ENCODE measurements at regions of chr2 and their contacts with region 1.

Region 1: GRCh38 chr2:8681786-8682692 is at the start of gene ID2:
- DNase-seq: peak; percentile 100
- H3K4me3 Mint-ChIP-seq: peak within 1 kb of the TSS; percentile 98
- H3K27ac Mint-ChIP-seq: peak within 1 kb of the TSS; percentile 97
- H3K4me1 Mint-ChIP-seq: peaks cover 37% of the 10 kb centered on the region
- H3K27me3 Mint-ChIP-seq: peaks cover 13% of the 10 kb centered on the region
- total RNA-seq, gene ID2: 284 and 299 TPM in 2 replicates

Region 2: DNA sequence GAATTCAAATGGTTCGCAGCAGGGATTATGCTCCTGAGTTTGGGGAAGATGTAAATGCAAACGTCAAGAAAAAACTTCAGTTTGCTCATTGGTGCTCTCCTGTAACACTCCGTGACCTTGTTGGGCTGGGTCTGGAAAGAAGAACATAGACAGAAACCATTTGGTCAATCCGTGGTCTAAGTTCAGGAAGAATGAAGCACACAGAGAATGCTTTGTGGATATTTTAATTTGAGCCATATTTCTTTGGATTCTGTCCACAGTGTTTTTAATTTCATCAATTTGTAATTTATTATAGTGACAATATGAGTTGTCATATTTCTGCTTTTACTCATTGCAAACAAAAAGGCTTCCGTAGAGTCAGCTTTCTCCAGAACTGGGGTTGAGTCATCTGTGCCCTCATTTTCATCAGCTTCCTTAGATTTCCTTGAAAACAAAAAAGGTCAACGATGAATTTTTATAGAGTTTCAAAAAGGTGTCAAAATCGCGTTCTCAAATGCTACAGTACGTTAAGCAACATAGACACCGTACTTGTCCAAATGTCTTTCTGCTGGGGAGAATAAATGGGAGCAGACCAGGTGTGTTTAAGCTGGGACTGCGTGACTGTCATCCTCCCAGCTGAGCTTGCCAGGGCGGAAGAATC is 1158.4 kb before region 1 on chr2:
- intact Hi-C with region 1: loop called (anchors 5 kb)
- DNase-seq: no peak
- H3K4me3 Mint-ChIP-seq: peak overlapping the region; percentile 63
- H3K27ac Mint-ChIP-seq: peak overlapping the region; percentile 98
- H3K4me1 Mint-ChIP-seq: peaks cover 53% of the 10 kb centered on the region
- H3K27me3 Mint-ChIP-seq: no peaks in the 10 kb centered on the region

Region 3: DNA sequence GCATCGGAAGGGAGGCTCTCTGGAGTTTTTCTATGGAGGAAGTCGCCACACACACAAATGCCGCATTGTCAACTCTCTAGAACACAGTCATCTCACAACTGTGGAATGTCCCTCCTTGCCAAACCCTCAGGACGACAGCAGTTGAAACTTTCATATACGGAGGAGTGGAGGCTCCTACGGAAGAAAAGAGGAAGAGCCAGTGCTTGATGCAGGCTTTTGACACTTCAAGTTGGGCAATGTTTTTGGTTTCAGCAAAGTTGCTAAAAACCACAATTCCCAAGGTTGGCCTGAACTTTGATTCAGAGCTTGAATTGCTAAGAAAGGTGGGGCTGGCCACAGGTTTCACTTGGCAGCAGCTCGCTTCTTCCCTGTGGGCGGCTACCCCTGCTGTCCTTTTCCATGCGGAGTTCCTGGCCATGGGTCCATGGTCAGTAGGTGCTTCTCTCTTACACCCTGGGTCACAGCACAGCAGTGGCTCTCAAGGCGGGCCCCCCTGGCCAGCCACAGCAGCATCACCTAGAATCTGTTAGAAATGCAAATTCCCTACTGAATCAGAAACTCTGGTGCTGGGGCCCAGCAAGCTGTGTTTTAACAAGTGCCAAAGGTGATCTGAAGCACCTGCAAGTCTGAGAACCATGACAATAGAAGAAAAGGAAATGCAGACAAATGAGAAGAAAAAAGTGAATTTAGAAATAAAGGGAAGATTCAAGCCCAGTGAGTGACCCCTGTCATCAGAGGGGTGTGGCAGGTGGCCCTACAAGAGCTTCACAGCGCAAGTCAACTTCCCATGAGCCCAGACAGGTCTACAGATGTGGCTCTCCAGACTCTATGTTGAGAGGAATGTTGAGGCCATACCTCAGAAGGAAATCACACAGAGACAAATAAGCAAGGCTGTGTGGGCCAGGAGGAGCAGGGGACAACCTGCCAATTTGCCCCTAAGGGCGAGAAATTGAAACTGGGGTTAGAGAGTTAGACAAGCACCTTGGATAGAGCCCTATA is 908.4 kb before region 1 on chr2:
- intact Hi-C with region 1: loop called (anchors 1 kb)
- DNase-seq: peak; percentile 79
- H3K4me3 Mint-ChIP-seq: peak overlapping the region; percentile 25
- H3K27ac Mint-ChIP-seq: peak overlapping the region; percentile 84
- H3K4me1 Mint-ChIP-seq: peaks cover 36% of the 10 kb centered on the region
- H3K27me3 Mint-ChIP-seq: no peaks in the 10 kb centered on the region

Region 4: DNA sequence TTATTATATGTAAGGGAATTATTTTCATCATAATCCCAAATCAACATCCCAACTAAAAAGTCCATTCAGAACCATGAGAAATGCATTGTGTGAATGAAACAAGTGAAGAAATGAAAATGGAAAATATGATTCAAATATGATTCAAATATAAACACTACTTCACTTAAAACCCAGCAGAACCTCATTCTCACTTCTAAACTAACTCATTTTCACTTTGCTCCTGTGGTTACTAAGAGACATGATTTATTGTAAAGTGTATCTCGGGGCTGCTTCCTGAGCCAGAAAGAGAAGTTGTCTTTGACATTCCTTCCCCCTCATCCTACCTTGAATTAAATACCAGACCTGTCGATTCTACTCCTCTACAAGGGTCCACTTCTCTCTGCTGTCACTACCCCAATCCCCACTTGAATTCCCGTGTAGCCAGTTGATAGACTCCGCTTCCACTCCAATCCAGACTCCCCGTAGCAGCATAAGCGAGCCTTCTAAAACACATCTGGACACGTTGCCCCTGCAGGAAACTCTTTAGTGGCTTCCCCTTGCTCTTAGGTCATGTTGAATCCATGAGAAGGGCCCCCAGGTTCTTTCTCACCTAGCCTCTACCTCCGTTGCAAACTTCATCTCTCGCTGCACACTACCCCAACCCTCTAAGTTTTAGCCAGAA is 697.2 kb before region 1 on chr2:
- intact Hi-C with region 1: loop called (anchors 5 kb)
- DNase-seq: no peak
- H3K4me3 Mint-ChIP-seq: peak overlapping the region; percentile 13
- H3K27ac Mint-ChIP-seq: peak overlapping the region; percentile 87
- H3K4me1 Mint-ChIP-seq: peaks cover 17% of the 10 kb centered on the region
- H3K27me3 Mint-ChIP-seq: no peaks in the 10 kb centered on the region

Region 5: DNA sequence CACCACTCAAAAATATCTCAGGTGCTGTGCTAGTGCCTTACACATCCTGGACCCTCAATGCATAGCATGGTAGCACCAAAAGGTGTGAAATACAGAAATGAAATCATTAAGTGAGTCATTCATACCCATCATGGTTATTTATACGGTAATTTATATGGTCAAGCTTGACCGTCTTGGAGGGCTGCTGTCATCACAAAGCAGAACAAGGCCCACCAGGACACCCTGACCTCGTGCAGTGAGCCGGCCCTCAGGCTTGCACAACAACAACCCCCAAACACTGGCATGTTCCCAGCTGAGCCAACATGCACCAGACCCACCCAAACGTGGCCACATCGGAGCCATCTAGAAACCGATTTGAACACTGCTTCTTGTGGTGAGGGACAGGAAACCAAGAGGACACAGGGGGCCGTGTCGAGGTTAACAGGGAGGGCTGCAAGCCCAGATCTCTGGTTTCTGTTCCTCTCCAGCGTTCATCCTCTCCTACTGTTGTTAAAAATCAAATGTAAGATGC is 378.7 kb before region 1 on chr2:
- intact Hi-C with region 1: loop called (anchors 1 kb)
- DNase-seq: peak; percentile 94
- H3K4me3 Mint-ChIP-seq: peak overlapping the region; percentile 71
- H3K27ac Mint-ChIP-seq: peak overlapping the region; percentile 83
- H3K4me1 Mint-ChIP-seq: peaks cover 72% of the 10 kb centered on the region
- H3K27me3 Mint-ChIP-seq: no peaks in the 10 kb centered on the region

Region 6: DNA sequence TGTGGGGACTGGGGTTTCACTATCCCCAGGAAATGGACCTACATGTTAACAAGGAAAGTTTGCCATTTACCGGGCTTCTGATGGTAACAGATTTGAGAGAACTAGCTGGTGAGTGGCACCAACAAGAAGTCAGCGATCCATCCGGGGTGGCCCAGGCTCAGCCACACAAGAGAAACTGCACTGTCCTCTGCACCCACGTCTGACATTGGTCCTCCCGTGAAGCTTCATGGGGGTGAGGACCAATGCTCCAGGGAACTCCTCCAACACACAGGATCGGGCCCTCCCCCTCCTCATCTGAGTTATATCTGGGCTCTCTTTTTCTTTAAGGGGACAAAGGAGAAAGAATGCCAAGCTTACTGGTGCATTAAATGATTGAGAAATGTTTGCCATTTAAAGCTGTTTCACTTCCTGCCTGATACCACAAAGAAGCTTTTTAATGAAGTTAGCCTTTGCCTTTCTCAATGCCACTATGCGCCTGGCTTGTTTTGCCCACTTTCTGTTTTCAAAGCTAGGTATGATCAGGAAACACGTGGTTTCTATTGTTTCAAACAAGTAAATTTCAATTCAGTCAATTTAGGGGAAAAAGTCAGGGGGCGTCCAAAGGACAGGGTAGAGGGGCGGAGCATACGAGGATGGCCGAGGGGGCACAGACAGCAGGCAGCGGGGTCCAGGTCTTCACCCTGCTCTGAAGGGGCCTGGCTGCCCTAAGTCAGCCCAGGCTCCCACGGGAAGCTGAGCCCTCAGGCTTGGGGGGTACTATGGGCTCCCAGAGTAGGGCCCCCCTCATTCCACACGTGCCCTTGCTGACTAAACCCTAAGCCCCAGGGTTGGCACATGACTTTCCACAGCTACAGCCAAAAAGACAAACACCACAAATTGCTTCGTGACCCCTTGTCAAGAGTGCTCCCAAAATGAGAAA is 204.2 kb before region 1 on chr2:
- intact Hi-C with region 1: loop called (anchors 2 kb)
- DNase-seq: peak; percentile 76
- H3K4me3 Mint-ChIP-seq: peak overlapping the region; percentile 53
- H3K27ac Mint-ChIP-seq: peak overlapping the region; percentile 84
- H3K4me1 Mint-ChIP-seq: peaks cover 84% of the 10 kb centered on the region
- H3K27me3 Mint-ChIP-seq: no peaks in the 10 kb centered on the region

Region 7: DNA sequence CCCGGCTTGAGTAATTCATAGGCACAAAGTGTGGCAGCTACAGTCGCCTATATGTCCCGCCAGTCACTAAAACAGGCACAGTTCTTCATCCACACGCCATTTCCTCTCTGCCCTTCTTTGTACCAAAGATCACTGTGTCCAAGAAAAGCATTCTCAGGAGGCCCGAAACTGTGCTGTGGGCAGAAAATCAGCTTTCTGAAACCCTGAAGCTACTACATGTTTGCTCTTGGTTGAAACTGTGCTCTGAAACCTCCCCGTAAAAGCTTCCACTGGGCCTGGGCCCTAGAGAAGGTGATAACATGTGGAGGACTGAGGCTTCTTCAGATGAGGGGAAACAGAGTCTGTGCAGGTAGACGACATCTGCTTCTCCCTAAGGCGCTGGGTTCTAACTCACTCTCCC is 75.8 kb before region 1 on chr2:
- intact Hi-C with region 1: loop called (anchors 1 kb)
- DNase-seq: no peak
- H3K4me3 Mint-ChIP-seq: no peak overlapping the region
- H3K27ac Mint-ChIP-seq: no peak overlapping the region
- H3K4me1 Mint-ChIP-seq: peaks cover 22% of the 10 kb centered on the region
- H3K27me3 Mint-ChIP-seq: peaks cover 3% of the 10 kb centered on the region

Measured in activated CD4-positive, alpha-beta T cell treated with anti-CD3 and anti-CD28 coated beads, Interleukin-2, amount 10 ng/mL, durations not matched to agents 24 days and 14 days (primary cell).